Spleen (tissue), 13 donors: ENCODE measurements at regions of chr9 and their contacts with region 1.

Region 1: GRCh38 chr9:121399883-121400607 is 30.0 kb upstream of the STOM start:
- DNase-seq: no peak
- H3K4me3 ChIP-seq: no peak overlapping the region
- H3K27ac ChIP-seq: peak overlapping the region in 1 of 8 donors; percentile 39
- H3K4me1 ChIP-seq: peaks cover 0 to 10% (median 0%) of the 10 kb centered on the region in 6 donors
- H3K27me3 ChIP-seq: no peaks in the 10 kb centered on the region
- CTCF ChIP-seq: peak; percentile 47 to 87 (median 75)
- POLR2A ChIP-seq: no peak

Region 2: GRCh38 chr9:120936011-120936763 is 463.9 kb before region 1 on chr9:
- intact Hi-C with region 1: no loop called
- DNase-seq: peak; percentile 97
- H3K4me3 ChIP-seq: peak overlapping the region in 1 of 8 donors; percentile 17
- H3K27ac ChIP-seq: peak overlapping the region; percentile 29 to 96 (median 94)
- H3K4me1 ChIP-seq: peaks cover 50 to 65% (median 61%) of the 10 kb centered on the region in 6 donors
- H3K27me3 ChIP-seq: no peaks in the 10 kb centered on the region
- CTCF ChIP-seq: peak; percentile 80 to 97 (median 93)
- POLR2A ChIP-seq: no peak

Region 3: GRCh38 chr9:121233906-121234901 is 165.8 kb before region 1 on chr9:
- intact Hi-C with region 1: loop called (anchors 10 kb)
- DNase-seq: no peak
- H3K4me3 ChIP-seq: no peak overlapping the region
- H3K27ac ChIP-seq: peak overlapping the region in 2 of 8 donors; percentile 9 to 24
- H3K4me1 ChIP-seq: peaks cover 0 to 15% (median 5%) of the 10 kb centered on the region in 6 donors
- H3K27me3 ChIP-seq: no peaks in the 10 kb centered on the region
- CTCF ChIP-seq: no peak
- POLR2A ChIP-seq: no peak

Region 4: DNA sequence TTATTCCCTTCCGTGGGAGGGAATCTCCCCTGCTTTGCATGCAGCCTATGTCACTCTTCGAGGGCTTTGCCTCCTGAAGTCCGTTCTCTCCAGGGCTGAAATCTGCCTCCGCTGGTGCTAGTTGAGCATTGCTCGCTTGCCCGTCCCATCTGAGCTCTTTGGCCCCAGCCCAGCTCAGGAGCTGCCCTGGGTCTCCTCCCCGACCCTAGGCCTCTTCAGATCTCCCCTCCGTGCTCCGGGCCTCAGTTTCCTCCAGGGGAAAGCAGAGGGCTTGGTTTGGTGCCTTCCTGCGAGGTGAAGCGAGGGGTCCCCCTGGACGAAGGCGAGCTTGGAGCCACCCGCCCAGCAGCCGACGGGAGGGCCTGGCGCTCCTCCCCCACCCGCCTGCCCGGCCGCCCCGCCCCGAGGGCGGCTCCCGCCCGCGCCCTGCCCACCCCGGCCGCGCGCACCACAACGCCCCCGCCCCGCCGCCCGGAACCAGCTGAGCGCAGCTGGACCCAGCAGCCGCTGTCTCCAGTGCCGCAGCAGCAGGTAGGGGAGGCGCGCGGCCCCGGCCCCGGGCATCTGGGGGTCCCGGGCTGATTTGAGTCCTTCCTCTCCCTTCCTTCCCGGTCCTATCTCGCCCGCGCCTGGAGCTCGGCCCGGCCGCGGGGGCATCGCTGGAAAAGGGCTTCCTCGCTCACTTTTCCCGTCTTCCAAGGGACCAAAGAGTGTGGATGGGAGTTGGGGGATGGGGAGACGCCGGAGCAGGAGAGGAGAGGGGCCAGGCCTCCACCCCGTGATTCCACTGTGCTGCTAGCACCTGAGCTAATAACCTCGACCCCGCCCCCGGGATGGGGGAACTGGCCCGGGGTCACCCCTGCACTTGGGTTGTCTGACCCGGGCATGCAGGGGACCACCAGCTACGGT is 132.1 kb before region 1 on chr9 and contains the start of gene GSN:
- intact Hi-C with region 1: no loop called
- DNase-seq: peak; percentile 96
- H3K4me3 ChIP-seq: peak within 1 kb of the TSS; percentile 42 to 85 (median 76)
- H3K27ac ChIP-seq: peak within 1 kb of the TSS; percentile 53 to 95 (median 88)
- H3K4me1 ChIP-seq: peaks cover 30 to 67% (median 50%) of the 10 kb centered on the region in 6 donors
- H3K27me3 ChIP-seq: no peaks in the 10 kb centered on the region
- CTCF ChIP-seq: no peak
- POLR2A ChIP-seq: no peak
- total RNA-seq, gene GSN: 165 to 432 (median 263) TPM

Region 5: GRCh38 chr9:121326130-121326838 is 73.8 kb before region 1 on chr9:
- intact Hi-C with region 1: loop called (anchors 5 kb)
- DNase-seq: peak; percentile 88
- H3K4me3 ChIP-seq: no peak overlapping the region
- H3K27ac ChIP-seq: peak overlapping the region; percentile 70 to 88 (median 84)
- H3K4me1 ChIP-seq: peaks cover 0 to 86% (median 33%) of the 10 kb centered on the region in 6 donors
- H3K27me3 ChIP-seq: no peaks in the 10 kb centered on the region
- CTCF ChIP-seq: no peak
- POLR2A ChIP-seq: peak in 1 of 3 donors; percentile 14